Caco-2 (cell line): ENCODE measurements at regions of chr16 and their contacts with region 1.

Region 1: GRCh38 chr16:70685938-70686375 is at the start of gene MTSS2:
- DNase-seq: peak; percentile 80 to 87
- H3K4me3 ChIP-seq: peak within 1 kb of the TSS; percentile 95
- H3K4me3 Mint-ChIP-seq: peak within 1 kb of the TSS; percentile 76
- H3K27ac Mint-ChIP-seq: peak within 1 kb of the TSS; percentile 69
- H3K4me1 ChIP-seq: peaks cover 39% of the 10 kb centered on the region
- H3K4me1 Mint-ChIP-seq: peaks cover 29% of the 10 kb centered on the region
- H3K27me3 ChIP-seq: no peaks in the 10 kb centered on the region
- H3K27me3 Mint-ChIP-seq: no peaks in the 10 kb centered on the region
- CTCF ChIP-seq: no peak
- total RNA-seq, gene MTSS2: 45.5 and 64.1 TPM in 2 replicates

Region 2: DNA sequence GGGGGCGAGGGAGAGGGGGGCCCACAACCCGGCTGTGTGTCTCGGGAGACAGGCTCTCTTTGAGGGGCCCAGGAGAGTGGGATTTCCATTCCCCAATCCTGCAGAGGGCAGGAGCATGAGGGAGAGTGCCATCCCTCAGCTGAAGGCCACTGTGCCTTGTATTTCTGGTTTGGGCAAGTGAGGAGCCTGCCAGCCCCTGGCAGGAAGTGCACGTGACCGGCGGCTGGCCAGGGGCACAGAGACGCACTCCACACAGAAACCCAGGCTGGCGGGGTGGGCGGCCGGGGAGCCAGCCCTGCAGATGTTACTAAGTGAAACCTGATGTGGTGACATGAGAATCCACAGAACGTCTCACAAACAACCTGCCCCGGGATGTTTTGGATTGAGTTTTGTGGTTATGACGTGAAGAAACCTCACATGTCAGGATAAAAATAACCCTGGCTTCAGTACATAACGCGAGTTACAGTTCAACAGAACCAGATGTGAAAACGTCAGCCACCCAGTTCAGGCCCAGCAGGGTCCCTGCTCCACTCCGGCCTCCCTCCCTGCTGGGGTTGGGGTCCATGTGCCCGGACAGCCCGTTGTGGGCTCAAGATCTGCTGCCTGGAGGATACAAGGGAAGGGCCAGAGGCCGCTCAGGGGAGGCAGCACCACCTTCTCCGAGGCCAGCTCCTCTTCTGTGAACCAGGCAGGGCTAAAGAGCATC is 51.6 kb after region 1 on chr16:
- CTCF ChIA-PET with region 1: interaction called, 9 read pairs
- POLR2A ChIA-PET with region 1: no interaction called
- intact Hi-C with region 1: loop called (anchors 2 kb)
- DNase-seq: no peak
- H3K4me3 ChIP-seq: no peak overlapping the region
- H3K4me3 Mint-ChIP-seq: no peak overlapping the region
- H3K27ac Mint-ChIP-seq: peak overlapping the region; percentile 54
- H3K4me1 ChIP-seq: no peaks in the 10 kb centered on the region
- H3K4me1 Mint-ChIP-seq: no peaks in the 10 kb centered on the region
- H3K27me3 ChIP-seq: no peaks in the 10 kb centered on the region
- H3K27me3 Mint-ChIP-seq: no peaks in the 10 kb centered on the region
- CTCF ChIP-seq: no peak

Region 3: GRCh38 chr16:70770626-70771552 is 84.9 kb after region 1 on chr16:
- CTCF ChIA-PET with region 1: interaction called, 9 read pairs
- POLR2A ChIA-PET with region 1: no interaction called
- intact Hi-C with region 1: loop called (anchors 2 kb)
- DNase-seq: peak; percentile 68 to 82
- H3K4me3 ChIP-seq: no peak overlapping the region
- H3K4me3 Mint-ChIP-seq: no peak overlapping the region
- H3K27ac Mint-ChIP-seq: no peak overlapping the region
- H3K4me1 ChIP-seq: no peaks in the 10 kb centered on the region
- H3K4me1 Mint-ChIP-seq: peaks cover 6% of the 10 kb centered on the region
- H3K27me3 ChIP-seq: no peaks in the 10 kb centered on the region
- H3K27me3 Mint-ChIP-seq: no peaks in the 10 kb centered on the region
- CTCF ChIP-seq: peak; percentile 97